ENCODE measurements at regions of chr7 and their contacts with region 1.

Region 1: DNA sequence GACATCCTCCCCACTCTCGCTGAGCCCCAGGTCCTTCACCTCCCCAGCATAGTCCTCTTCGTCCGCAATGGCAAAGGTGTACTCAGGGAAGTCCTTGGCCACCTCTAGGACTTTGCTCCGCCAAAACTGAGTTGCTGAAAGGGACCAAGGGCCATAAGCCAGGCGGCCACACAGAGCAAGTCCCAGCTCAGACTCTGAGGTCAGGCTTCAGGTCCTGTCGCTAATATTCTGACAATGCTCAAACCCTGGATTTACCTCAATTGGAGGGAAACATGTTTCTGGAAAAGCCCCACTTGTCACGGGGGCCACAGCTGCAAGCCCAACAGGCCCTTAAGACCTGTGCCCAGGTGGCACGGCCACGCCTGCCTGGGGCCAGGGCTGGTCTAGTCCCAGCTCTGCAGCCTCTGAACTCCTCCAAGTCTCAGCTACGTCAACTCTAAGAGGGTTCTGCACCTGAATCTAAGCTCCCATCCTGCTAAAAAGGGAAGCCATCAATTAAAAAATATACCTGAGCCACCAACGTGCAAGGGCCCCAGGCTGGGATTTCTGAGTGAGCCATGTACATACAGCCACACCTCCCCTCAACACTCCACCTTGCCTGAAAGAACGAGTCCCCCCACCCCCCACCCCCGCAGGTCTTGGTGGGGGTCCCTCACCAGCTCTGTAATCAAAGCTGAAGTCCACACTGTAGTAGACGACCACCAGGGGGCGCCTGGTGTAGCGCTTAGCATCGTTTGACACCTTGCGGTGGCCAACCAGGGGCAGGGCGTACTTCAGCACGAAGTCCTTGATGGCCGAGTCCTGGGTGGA is 22.9 kb downstream of the PDIA4 start:
- DNase-seq: peak; percentile 93
- ATAC-seq: peak; percentile 89 to 90
- H3K4me3 ChIP-seq: no peak overlapping the region
- H3K27ac ChIP-seq: no peak overlapping the region
- H3K4me1 ChIP-seq: no peaks in the 10 kb centered on the region
- H3K27me3 ChIP-seq: no peaks in the 10 kb centered on the region
- CTCF ChIP-seq: peak; percentile 89

Region 2: DNA sequence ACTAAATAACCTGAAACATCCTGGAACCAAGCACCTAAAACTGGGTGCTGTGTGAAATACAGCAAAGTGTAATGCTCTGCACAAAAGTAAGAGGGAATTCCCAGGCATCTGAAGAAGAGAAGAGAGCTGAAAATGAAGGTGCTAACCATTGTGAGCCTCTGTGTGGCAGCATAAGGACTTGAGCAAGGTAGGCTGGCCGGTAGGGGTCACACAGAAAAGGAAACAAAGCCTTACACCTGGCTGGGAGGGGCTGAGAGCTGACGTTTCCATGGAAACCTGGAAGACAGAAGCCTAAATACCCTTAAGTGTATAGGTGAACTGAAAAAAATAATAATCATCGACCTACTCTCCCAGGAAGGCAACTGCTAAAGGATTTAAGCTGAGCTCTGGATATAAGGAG is 258.2 kb before region 1 on chr7:
- intact Hi-C with region 1: no loop called
- DNase-seq: no peak
- ATAC-seq: peak in 1 of 2 donors; percentile 59
- H3K4me3 ChIP-seq: no peak overlapping the region
- H3K27ac ChIP-seq: no peak overlapping the region
- H3K4me1 ChIP-seq: no peaks in the 10 kb centered on the region
- H3K27me3 ChIP-seq: no peaks in the 10 kb centered on the region
- CTCF ChIP-seq: no peak

Region 3: GRCh38 chr7:149067876-149068275 is 62.4 kb after region 1 on chr7:
- intact Hi-C with region 1: loop called (anchors 10 kb)
- DNase-seq: no peak
- ATAC-seq: no peak
- H3K4me3 ChIP-seq: no peak overlapping the region
- H3K27ac ChIP-seq: no peak overlapping the region
- H3K4me1 ChIP-seq: peaks cover 3% of the 10 kb centered on the region
- H3K27me3 ChIP-seq: no peaks in the 10 kb centered on the region
- CTCF ChIP-seq: no peak

Region 4: DNA sequence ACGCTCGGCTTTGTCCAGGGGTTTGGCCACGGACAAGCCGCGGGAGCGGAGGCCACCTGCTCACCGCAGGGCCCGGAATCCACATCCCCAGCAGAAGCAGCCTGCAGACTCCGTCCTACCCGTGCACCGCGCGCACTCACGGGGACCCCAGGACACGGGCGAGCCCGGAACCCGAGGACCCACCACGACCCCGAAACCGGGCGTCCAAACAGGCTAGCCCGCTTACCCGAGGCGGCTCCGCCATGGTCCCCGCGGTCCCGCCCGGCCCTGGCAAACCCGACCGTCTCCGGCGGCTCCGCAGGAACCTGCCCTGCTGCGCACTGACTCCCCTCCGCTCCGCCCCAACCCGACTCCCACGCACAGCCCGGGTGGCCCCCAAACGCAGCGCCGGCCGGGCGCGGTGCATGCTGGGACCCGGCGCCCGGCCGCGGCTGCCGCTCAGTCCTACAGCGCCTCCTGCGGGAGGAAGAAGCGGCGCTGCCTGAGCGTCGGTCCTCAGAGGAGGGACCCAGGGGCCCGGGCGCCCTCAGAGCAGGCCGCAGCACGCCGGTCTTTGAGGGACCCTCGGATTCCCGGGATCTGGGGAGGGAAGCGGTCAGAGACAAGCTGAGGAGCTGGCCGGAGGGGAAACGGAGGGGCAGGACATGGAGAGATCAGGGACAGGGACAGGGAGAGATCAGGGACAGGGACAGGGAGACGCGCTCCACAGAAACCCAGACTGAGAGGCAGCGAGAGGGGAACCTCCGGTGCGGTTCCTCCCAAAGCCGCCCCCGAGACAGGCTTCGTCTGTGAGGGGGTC is 85.2 kb after region 1 on chr7 and contains the start of gene ZNF786:
- intact Hi-C with region 1: loop called (anchors 10 kb)
- DNase-seq: peak; percentile 92
- ATAC-seq: peak; percentile 98 to 99
- H3K4me3 ChIP-seq: peak within 1 kb of the TSS; percentile 94
- H3K27ac ChIP-seq: peak within 1 kb of the TSS; percentile 98
- H3K4me1 ChIP-seq: peaks cover 20% of the 10 kb centered on the region
- H3K27me3 ChIP-seq: no peaks in the 10 kb centered on the region
- CTCF ChIP-seq: peak; percentile 90
- total RNA-seq, gene ZNF786: 5.4 TPM

Measured in lower lobe of right lung (tissue), 2 donors.